ENCODE measurements at regions of chr14 and their contacts with region 1.

Region 1: GRCh38 chr14:76077333-76077732 is 74.4 kb upstream of the GPATCH2L start:
- DNase-seq: no peak
- ATAC-seq: no peak
- H3K4me3 ChIP-seq: no peak overlapping the region
- H3K27ac ChIP-seq: peak overlapping the region in 1 of 10 donors; percentile 22
- H3K4me1 ChIP-seq: peaks cover 0 to 19% (median 0%) of the 10 kb centered on the region in 9 donors
- H3K27me3 ChIP-seq: no peaks in the 10 kb centered on the region
- CTCF ChIP-seq: no peak

Region 2: DNA sequence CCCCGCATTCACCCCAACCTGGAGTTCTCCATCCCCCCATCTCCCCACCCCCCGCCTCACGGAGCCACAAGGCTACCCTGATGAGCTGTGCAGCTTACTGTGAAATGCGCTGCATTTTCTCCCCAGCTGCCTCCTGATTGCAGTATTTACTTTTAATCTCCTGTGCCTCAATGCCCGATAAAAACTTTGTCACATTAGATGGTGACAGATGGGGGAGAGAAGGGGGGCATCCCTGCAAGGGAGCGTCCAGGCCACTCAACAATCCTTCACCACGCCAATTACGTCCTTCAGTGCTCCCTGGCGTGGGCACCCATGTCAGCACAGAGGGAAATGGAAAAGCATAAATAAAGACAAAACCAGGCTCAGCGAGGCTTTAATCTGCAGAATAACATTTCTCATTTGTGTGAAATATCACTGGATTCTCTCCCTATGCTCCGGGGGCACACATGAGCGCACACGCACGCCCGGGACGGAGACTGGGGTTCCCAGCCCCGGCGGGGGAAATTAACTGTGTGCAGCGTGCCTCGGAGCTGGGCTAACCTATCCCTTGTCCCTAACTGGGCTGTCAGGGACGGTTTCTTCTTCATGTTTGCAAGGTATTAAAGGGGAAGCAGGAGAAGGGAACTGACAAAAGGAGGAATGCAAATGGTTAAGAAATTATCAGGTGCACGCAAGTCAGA is 497.2 kb after region 1 on chr14:
- intact Hi-C with region 1: loop called in 1 of 10 experiments (anchors 5 kb)
- DNase-seq: no peak
- ATAC-seq: no peak
- H3K4me3 ChIP-seq: no peak overlapping the region
- H3K27ac ChIP-seq: no peak overlapping the region
- H3K4me1 ChIP-seq: peaks cover 0 to 11% (median 6%) of the 10 kb centered on the region in 9 donors
- H3K27me3 ChIP-seq: peaks cover 0 to 6% (median 0%) of the 10 kb centered on the region in 7 donors
- CTCF ChIP-seq: no peak